AG04450 (cell line): ENCODE measurements at regions of chr4 and their contacts with region 1.

Region 1: DNA sequence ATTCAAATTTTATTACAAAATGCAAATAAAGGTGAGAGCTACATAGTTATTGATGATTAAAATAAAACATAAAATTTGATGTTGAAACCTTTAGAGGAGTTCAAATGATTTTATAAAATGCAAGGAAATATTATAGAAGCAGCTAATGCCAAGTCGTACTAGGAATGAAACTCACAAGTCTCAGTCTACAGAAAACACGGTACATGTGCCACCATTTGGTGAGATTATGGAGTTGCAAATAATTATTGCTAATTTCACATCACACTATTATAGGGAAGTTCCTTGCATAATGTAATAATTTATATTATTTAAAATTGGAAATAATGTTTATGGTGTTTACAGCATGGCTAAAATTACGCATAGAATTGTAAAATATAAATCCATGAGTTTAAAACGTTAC is 1601.7 kb upstream of the TENM3 start:
- DNase-seq: no peak
- H3K4me3 ChIP-seq: no peak overlapping the region
- H3K27ac ChIP-seq: no peak overlapping the region
- H3K27me3 ChIP-seq: no peaks in the 10 kb centered on the region
- CTCF ChIP-seq: no peak

Region 2: GRCh38 chr4:180766944-180767729 is 125.6 kb after region 1 on chr4:
- CTCF ChIA-PET with region 1: interaction called, 10 read pairs
- POLR2A ChIA-PET with region 1: no interaction called
- DNase-seq: no peak
- H3K4me3 ChIP-seq: no peak overlapping the region
- H3K27ac ChIP-seq: no peak overlapping the region
- H3K27me3 ChIP-seq: no peaks in the 10 kb centered on the region
- CTCF ChIP-seq: no peak